ENCODE measurements at regions of chr1 and their contacts with region 1.

Region 1: GRCh38 chr1:75724472-75725022 is at the start of gene ACADM:
- DNase-seq: peak; percentile 79 to 86
- ATAC-seq: peak; percentile 90 to 92
- H3K4me3 ChIP-seq: peak within 1 kb of the TSS; percentile 70 to 93 (median 85)
- H3K27ac ChIP-seq: peak within 1 kb of the TSS; percentile 87 to 95 (median 90)
- H3K4me1 ChIP-seq: peaks cover 27 to 38% of the 10 kb centered on the region in 2 donors
- H3K27me3 ChIP-seq: no peaks in the 10 kb centered on the region
- CTCF ChIP-seq: no peak
- POLR2A ChIP-seq: peak; percentile 72 to 85
- total RNA-seq, gene ACADM: 92.4 to 128 (median 111) TPM

Region 2: DNA sequence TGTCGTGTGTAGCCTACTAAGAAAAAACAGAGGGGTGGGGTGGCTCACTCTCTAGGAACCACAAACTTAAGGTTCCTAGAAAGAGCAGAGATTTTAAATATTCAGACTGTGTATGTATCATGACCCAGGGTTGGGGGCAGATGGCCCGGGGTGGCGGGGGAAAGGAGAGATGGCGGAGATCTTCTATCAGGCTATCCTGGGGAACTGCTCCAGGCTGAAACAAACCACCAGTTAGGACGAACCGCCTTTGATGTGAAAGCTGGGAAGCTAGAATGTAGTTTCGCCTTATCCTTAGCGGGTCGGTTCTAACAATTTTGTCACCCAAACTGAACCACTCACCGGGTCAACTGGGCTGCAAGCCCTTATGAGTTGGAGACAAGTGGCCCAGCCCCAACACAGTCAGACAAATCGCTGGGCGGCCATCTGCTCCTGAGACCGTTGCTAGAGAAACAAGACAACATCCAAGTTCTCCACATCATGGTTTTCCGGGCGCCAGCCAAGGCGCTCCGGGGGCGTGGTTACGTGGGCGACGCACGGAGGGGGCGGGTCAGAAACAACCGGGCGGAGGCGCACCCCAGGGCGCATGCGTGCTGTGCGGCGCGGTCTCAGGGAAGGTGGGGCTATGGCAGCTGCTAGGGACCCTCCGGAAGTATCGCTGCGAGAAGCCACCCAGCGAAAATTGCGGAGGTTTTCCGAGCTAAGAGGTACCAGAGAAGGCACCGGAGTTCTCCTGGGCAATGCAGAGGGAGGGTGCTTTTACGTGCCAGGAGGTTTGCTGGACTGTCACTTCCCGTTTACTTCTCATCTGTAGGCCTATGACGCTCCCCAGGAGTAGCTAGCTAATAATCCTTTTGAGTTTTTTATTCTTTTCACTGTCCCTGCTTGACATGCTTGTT is 1526.6 kb before region 1 on chr1 and contains the starts of genes FPGT and LRRIQ3:
- in situ Hi-C with region 1: no loop called
- intact Hi-C with region 1: loop called (anchors 10 kb)
- DNase-seq: peak; percentile 83 to 89
- ATAC-seq: peak; percentile 97 to 99
- H3K4me3 ChIP-seq: peak within 1 kb of the TSS; percentile 63 to 92 (median 76)
- H3K27ac ChIP-seq: peak within 1 kb of the TSS; percentile 81 to 86 (median 84)
- H3K4me1 ChIP-seq: peaks cover 11 to 14% of the 10 kb centered on the region in 2 donors
- H3K27me3 ChIP-seq: no peaks in the 10 kb centered on the region
- CTCF ChIP-seq: no peak
- POLR2A ChIP-seq: peak; percentile 58 to 66
- total RNA-seq, gene FPGT: 2.7 to 6.0 (median 3.3) TPM
- total RNA-seq, gene LRRIQ3: 0.52 to 2.2 (median 0.56) TPM in 3 of 4 donors, not detected in the other

Region 3: DNA sequence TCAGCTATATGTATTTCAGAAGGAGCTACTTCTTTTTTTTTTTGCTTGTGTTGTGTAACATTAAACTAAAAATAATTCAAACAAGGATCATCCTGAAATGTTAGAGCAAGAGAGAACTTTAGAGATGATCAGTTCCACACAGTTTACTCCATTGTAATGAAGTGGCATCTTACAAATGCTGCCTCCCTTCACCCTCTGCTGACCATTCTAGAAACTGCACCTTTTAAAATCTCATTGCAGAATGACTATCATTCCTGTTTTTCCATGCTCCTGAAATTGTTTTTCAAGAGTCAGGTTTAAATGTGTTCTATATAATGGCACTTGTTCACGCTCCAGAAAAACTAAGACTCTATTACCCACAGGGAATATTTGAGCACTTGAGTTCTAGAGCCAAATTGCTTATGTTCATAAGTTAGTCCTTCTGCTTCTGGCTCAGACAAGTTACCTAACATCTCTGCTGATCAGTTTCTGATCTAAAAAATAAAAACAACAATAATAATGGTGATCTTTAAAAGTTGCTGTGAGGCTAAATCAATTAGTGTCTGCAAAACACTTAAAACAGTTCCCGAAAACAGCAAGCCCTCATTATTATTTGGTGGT is 92.1 kb before region 1 on chr1:
- in situ Hi-C with region 1: no loop called
- intact Hi-C with region 1: no loop called
- DNase-seq: no peak
- ATAC-seq: no peak
- H3K4me3 ChIP-seq: no peak overlapping the region
- H3K27ac ChIP-seq: no peak overlapping the region
- H3K4me1 ChIP-seq: no peaks in the 10 kb centered on the region
- H3K27me3 ChIP-seq: no peaks in the 10 kb centered on the region
- CTCF ChIP-seq: peak; percentile 15 to 60 (median 39)
- POLR2A ChIP-seq: no peak

Region 4: GRCh38 chr1:75785983-75786853 is 61.7 kb after region 1 on chr1 and contains the start of gene RABGGTB:
- in situ Hi-C with region 1: loop called in 2 of 4 experiments (anchors 5 to 10 kb)
- intact Hi-C with region 1: loop called (anchors 1 kb)
- DNase-seq: peak; percentile 92 to 95
- ATAC-seq: peak; percentile 96 to 97
- H3K4me3 ChIP-seq: peak within 1 kb of the TSS; percentile 71 to 89 (median 83)
- H3K27ac ChIP-seq: peak within 1 kb of the TSS; percentile 88 to 96 (median 92)
- H3K4me1 ChIP-seq: peaks cover 44% of the 10 kb centered on the region in 2 donors
- H3K27me3 ChIP-seq: no peaks in the 10 kb centered on the region
- CTCF ChIP-seq: no peak
- POLR2A ChIP-seq: peak; percentile 88 to 92
- total RNA-seq, gene RABGGTB: 48.7 to 74.5 (median 62.6) TPM